Activated CD4-positive, alpha-beta T cell treated with anti-CD3 and anti-CD28 coated beads for 36 hours (primary cell): ENCODE measurements at regions of chr16 and their contacts with region 1.

Region 1: DNA sequence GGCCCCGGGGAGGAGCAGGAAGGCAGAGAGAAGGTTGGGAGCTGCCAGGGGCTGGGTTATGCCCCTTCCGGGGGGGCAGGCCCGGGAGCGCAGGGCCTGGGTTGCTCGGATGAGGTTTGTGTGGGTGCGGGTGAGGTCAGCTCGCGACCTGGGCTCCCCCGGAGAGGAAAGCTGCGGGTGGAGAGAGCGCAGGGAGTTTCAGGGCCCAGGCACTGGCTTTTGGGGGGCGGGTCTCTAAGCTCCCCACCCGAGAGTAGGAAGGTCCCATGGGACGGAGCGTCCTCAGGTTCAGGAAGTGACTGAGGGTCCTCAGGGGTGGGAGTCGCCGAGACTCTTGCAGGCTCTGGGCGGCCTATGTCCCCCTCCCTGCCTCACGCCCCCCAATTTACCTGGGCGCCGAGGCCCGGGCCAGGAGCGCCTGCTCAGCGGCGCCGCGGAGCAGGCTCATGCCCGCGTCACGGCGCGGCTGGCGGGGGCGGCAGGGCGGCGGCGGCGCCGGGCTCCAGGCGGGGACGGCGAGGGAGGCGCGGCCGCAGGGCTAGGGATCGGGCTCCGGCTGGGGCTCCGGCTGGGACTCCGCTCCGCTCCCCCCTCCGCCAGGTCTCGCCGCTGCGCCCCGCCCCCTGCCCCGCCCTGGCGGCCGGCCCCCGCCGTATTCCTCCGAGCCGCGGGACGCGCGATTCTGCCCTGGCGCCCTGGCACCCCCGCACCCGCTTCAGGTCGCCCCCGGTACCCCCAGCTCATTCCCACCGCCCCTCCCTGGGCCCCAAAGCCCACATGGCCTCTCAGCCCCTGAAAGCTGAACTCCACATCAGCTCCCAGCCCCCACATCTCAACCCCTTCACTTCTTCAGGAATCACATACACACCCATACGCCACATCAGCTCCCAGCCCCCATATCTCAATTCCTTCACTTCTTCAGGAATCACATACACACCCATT is at the start of gene DOK4:
- DNase-seq: peak; percentile 89
- ATAC-seq: peak; percentile 93
- H3K4me3 Mint-ChIP-seq: peak within 1 kb of the TSS; percentile 75
- H3K27ac Mint-ChIP-seq: peak within 1 kb of the TSS; percentile 71
- H3K4me1 Mint-ChIP-seq: peaks cover 22% of the 10 kb centered on the region
- H3K27me3 Mint-ChIP-seq: no peaks in the 10 kb centered on the region
- total RNA-seq, gene DOK4: 5.7 to 6.7 TPM

Region 2: GRCh38 chr16:57462209-57462977 is 23.8 kb before region 1 on chr16 and contains the start of gene POLR2C:
- CTCF ChIA-PET with region 1: interaction called, 9 read pairs
- POLR2A ChIA-PET with region 1: no interaction called
- intact Hi-C with region 1: loop called in 1 of 2 experiments (anchors 1 kb)
- DNase-seq: peak; percentile 96
- ATAC-seq: peak; percentile 96
- H3K4me3 Mint-ChIP-seq: peak within 1 kb of the TSS; percentile 90
- H3K27ac Mint-ChIP-seq: peak within 1 kb of the TSS; percentile 99
- H3K4me1 Mint-ChIP-seq: peaks cover 24% of the 10 kb centered on the region
- H3K27me3 Mint-ChIP-seq: no peaks in the 10 kb centered on the region
- total RNA-seq, gene POLR2C: 54.3 to 57.1 TPM

Region 3: GRCh38 chr16:57475711-57476339 is 10.4 kb before region 1 on chr16:
- CTCF ChIA-PET with region 1: interaction called, 11 read pairs
- POLR2A ChIA-PET with region 1: no interaction called
- intact Hi-C with region 1: loop called (anchors 1 kb)
- DNase-seq: peak; percentile 95
- ATAC-seq: peak; percentile 98
- H3K4me3 Mint-ChIP-seq: no peak overlapping the region
- H3K27ac Mint-ChIP-seq: peak overlapping the region; percentile 63
- H3K4me1 Mint-ChIP-seq: peaks cover 19% of the 10 kb centered on the region
- H3K27me3 Mint-ChIP-seq: no peaks in the 10 kb centered on the region

Region 4: GRCh38 chr16:57576429-57576870 is 90.3 kb after region 1 on chr16:
- CTCF ChIA-PET with region 1: no interaction called
- POLR2A ChIA-PET with region 1: no interaction called
- intact Hi-C with region 1: no loop called
- DNase-seq: peak; percentile 91
- ATAC-seq: peak; percentile 82
- H3K4me3 Mint-ChIP-seq: no peak overlapping the region
- H3K27ac Mint-ChIP-seq: no peak overlapping the region
- H3K4me1 Mint-ChIP-seq: peaks cover 33% of the 10 kb centered on the region
- H3K27me3 Mint-ChIP-seq: peaks cover 5% of the 10 kb centered on the region

Region 5: GRCh38 chr16:57775661-57776469 is 289.7 kb after region 1 on chr16:
- CTCF ChIA-PET with region 1: no interaction called
- POLR2A ChIA-PET with region 1: no interaction called
- intact Hi-C with region 1: no loop called
- DNase-seq: no peak
- ATAC-seq: no peak
- H3K4me3 Mint-ChIP-seq: no peak overlapping the region
- H3K27ac Mint-ChIP-seq: no peak overlapping the region
- H3K4me1 Mint-ChIP-seq: no peaks in the 10 kb centered on the region
- H3K27me3 Mint-ChIP-seq: no peaks in the 10 kb centered on the region